Calu3 (cell line): ENCODE measurements at regions of chr1 and their contacts with region 1.

Region 1: DNA sequence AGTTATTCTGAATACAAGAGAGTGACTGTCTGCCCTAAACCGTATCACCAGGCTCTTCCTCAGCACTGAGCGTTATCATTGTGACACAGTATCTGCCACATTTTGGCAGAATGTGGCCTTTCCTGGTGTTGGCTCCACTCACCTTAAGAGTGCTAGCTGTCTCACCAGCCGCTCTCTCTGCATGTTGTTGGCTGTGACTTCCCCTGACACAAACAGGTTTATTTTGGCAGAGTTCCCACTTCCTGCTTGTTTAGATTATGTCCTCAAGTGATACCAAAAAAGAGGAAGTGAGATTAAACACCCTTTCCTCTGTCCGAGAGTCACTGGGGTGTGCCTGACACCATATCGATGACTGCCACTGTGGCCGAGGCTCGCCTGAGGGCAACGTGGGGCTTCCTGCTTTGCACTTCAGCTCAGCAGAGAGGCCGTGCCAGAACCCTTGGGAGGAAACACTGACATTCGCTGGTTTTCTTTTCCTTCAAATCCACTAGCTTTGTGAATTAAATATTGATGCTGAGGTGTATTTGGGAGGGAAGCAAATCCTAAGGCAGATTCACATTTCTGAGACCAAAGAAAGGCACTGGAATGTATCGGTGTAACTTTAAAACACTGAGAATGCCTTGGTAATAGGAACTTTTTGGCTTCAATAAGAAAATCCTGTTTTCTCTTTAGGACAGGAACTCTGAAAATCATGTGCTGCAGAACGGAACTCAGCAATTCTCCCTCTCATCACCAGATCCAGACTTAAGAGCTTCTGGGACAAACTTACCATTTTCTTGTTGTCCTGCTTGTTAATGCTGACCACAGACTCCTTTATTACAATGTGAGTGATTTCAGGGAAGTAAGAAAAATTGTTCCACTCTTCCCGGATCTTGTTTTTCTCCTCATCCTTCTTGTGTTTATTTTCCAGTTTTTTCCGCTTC is 102.1 kb downstream of the JAK1 start:
- DNase-seq: peak; percentile 61
- H3K4me3 Mint-ChIP-seq: peak overlapping the region; percentile 2
- H3K27ac Mint-ChIP-seq: peak overlapping the region; percentile 80
- H3K4me1 Mint-ChIP-seq: peaks cover 31% of the 10 kb centered on the region
- H3K27me3 Mint-ChIP-seq: no peaks in the 10 kb centered on the region
- CTCF ChIP-seq: no peak

Region 2: DNA sequence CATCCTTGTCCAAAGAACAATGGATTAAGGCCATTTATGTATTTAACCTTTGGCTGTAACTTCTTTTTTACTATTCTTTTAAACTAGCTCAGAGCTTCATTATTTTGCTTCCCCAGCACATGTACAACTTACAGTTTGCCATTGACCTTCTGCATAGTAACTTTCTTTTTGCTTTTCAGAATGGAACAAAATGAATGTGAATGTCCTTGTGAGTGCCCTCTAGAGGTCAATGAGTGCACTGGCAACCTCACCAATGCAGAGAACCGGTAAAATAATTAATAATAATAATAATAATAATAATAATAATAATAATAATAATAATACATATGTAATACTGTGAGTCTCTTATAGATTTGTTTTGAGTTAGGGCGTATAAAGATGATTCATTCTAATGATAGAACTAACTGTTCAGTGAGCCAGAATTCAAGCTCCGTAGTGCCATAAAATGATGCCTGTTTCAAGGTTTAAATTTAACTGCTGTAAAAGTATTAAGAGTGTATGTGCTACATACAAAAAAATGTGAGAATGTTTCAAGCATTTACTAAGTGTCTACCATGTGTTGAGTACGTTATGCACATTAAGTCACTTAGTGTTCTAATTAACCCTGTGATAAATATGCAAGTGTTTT is 188.4 kb before region 1 on chr1:
- CTCF ChIA-PET with region 1: no interaction called
- intact Hi-C with region 1: no loop called
- DNase-seq: no peak
- H3K4me3 Mint-ChIP-seq: no peak overlapping the region
- H3K27ac Mint-ChIP-seq: no peak overlapping the region
- H3K4me1 Mint-ChIP-seq: no peaks in the 10 kb centered on the region
- H3K27me3 Mint-ChIP-seq: no peaks in the 10 kb centered on the region
- CTCF ChIP-seq: no peak

Region 3: DNA sequence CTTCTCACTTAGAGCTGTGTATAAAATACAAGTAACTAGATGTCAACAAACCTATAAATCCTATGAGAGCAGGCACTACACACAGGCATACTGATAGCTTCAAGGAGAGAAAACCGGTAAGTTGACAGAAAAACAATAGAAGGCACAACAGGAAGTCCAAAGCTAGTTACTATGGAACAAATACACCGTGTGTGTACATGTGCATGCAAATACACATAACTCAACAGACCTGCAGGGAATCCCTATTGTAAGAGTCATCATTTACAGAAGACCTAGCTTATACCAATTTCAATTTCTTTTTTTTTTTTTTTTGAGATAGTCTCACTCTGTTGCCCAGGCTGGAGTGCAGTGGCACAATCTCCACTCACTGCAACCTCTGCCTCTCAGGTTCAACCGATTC is 75.7 kb after region 1 on chr1:
- CTCF ChIA-PET with region 1: no interaction called
- intact Hi-C with region 1: no loop called
- DNase-seq: no peak
- H3K4me3 Mint-ChIP-seq: no peak overlapping the region
- H3K27ac Mint-ChIP-seq: no peak overlapping the region
- H3K4me1 Mint-ChIP-seq: peaks cover 9% of the 10 kb centered on the region
- H3K27me3 Mint-ChIP-seq: no peaks in the 10 kb centered on the region
- CTCF ChIP-seq: no peak

Region 4: GRCh38 chr1:64966158-64966971 is 102.1 kb after region 1 on chr1 and contains the start of gene JAK1:
- CTCF ChIA-PET with region 1: no interaction called
- intact Hi-C with region 1: loop called (anchors 5 kb)
- DNase-seq: peak; percentile 92
- H3K4me3 Mint-ChIP-seq: peak within 1 kb of the TSS; percentile 83
- H3K27ac Mint-ChIP-seq: peak within 1 kb of the TSS; percentile 61
- H3K4me1 Mint-ChIP-seq: peaks cover 49% of the 10 kb centered on the region
- H3K27me3 Mint-ChIP-seq: no peaks in the 10 kb centered on the region
- CTCF ChIP-seq: no peak
- total RNA-seq, gene JAK1: 107 and 130 TPM in 2 replicates

Region 5: GRCh38 chr1:65020774-65021173 is 156.5 kb after region 1 on chr1:
- CTCF ChIA-PET with region 1: interaction called, 6 read pairs
- intact Hi-C with region 1: loop called (anchors 2 kb)
- DNase-seq: no peak
- H3K4me3 Mint-ChIP-seq: no peak overlapping the region
- H3K27ac Mint-ChIP-seq: no peak overlapping the region
- H3K4me1 Mint-ChIP-seq: no peaks in the 10 kb centered on the region
- H3K27me3 Mint-ChIP-seq: no peaks in the 10 kb centered on the region
- CTCF ChIP-seq: peak; percentile 22